ENCODE measurements at regions of chr11 and their contacts with region 1.

Region 1: GRCh38 chr11:47454180-47454644 is 5.3 kb upstream of the RAPSN start:
- DNase-seq: peak in 8 of 10 donors; percentile 56 to 82 (median 72)
- H3K4me3 ChIP-seq: peak overlapping the region in 25 of 59 donors; percentile 11 to 50 (median 32)
- H3K27ac ChIP-seq: no peak overlapping the region
- H3K27me3 ChIP-seq: no peaks in the 10 kb centered on the region
- CTCF ChIP-seq: peak; percentile 40 to 85 (median 77)

Region 2: GRCh38 chr11:47509077-47509536 is 54.9 kb after region 1 on chr11:
- intact Hi-C with region 1: no loop called
- DNase-seq: no peak
- H3K4me3 ChIP-seq: no peak overlapping the region
- H3K27ac ChIP-seq: peak overlapping the region in 14 of 59 donors; percentile 2 to 69 (median 26)
- H3K27me3 ChIP-seq: no peaks in the 10 kb centered on the region
- CTCF ChIP-seq: no peak

Region 3: GRCh38 chr11:47616726-47617416 is 162.7 kb after region 1 on chr11:
- intact Hi-C with region 1: loop called in 1 of 2 experiments (anchors 5 kb)
- DNase-seq: peak in 7 of 10 donors; percentile 46 to 82 (median 60)
- H3K4me3 ChIP-seq: no peak overlapping the region
- H3K27ac ChIP-seq: peak overlapping the region in 44 of 59 donors; percentile 3 to 78 (median 47)
- H3K27me3 ChIP-seq: no peaks in the 10 kb centered on the region
- CTCF ChIP-seq: peak; percentile 43 to 85 (median 71)

Measured in dorsolateral prefrontal cortex (tissue), 120 donors.